Dorsolateral prefrontal cortex (tissue), 120 donors: ENCODE measurements at regions of chr6 and their contacts with region 1.

Region 1: GRCh38 chr6:89432875-89433251 is at the start of gene ANKRD6:
- DNase-seq: peak in 9 of 10 donors; percentile 36 to 83 (median 65)
- H3K4me3 ChIP-seq: peak within 1 kb of the TSS; percentile 54 to 91 (median 78)
- H3K27ac ChIP-seq: peak within 1 kb of the TSS in 8 of 59 donors; percentile 2 to 82 (median 48)
- H3K27me3 ChIP-seq: no peaks in the 10 kb centered on the region
- CTCF ChIP-seq: peak; percentile 48 to 96 (median 80)
- total RNA-seq, gene ANKRD6: 14.2 to 73.6 (median 37.4) TPM

Region 2: GRCh38 chr6:89413006-89413400 is 19.9 kb before region 1 on chr6:
- intact Hi-C with region 1: no loop called
- DNase-seq: peak in 3 of 10 donors; percentile 16 to 55 (median 28)
- H3K4me3 ChIP-seq: peak overlapping the region; percentile 65 to 98 (median 88)
- H3K27ac ChIP-seq: peak overlapping the region in 55 of 59 donors; percentile 1 to 98 (median 91)
- H3K27me3 ChIP-seq: no peaks in the 10 kb centered on the region
- CTCF ChIP-seq: no peak

Region 3: GRCh38 chr6:89582669-89583325 is 149.9 kb after region 1 on chr6:
- intact Hi-C with region 1: no loop called
- DNase-seq: no peak
- H3K4me3 ChIP-seq: no peak overlapping the region
- H3K27ac ChIP-seq: no peak overlapping the region
- H3K27me3 ChIP-seq: no peaks in the 10 kb centered on the region
- CTCF ChIP-seq: no peak

Region 4: DNA sequence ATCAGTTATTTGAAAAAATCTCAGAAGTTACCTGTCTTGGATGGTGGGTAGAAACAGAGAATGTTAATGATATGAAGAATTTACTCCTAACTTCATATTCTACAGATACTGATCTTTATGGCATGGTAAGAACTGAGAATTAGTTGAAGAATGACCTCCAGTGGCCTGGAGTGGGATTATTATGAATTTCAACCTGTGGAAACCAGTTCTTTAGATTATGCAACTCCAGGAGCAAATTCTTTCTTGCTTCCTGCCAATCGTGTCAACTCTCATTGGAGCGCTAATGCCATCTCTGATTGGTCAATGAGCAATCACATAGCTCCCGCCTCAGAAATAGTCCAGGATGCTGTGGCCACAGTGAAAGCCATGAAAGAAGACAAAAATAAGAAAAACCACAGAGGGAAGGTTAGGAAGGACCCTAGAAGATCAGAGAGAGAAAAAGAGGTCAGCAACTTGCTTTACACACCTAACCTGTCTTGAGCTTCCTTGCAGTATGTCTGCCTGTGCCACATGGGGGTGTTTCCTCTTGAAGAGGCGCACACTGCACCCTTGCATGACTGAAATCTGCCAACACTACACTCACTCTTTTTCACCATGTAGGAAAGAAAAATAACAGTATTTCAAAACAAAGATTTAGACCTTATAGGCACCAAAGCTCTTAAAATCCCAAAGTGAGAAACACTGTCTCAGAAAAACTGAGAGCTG is 165.3 kb after region 1 on chr6:
- intact Hi-C with region 1: loop called in 1 of 2 experiments (anchors 5 kb)
- DNase-seq: no peak
- H3K4me3 ChIP-seq: no peak overlapping the region
- H3K27ac ChIP-seq: no peak overlapping the region
- H3K27me3 ChIP-seq: no peaks in the 10 kb centered on the region
- CTCF ChIP-seq: peak in 30 of 56 donors; percentile 13 to 54 (median 32)

Region 5: GRCh38 chr6:89610149-89610642 is 177.3 kb after region 1 on chr6:
- intact Hi-C with region 1: loop called in 1 of 2 experiments (anchors 5 kb)
- DNase-seq: peak in 6 of 10 donors; percentile 17 to 49 (median 30)
- H3K4me3 ChIP-seq: no peak overlapping the region
- H3K27ac ChIP-seq: no peak overlapping the region
- H3K27me3 ChIP-seq: no peaks in the 10 kb centered on the region
- CTCF ChIP-seq: peak; percentile 26 to 79 (median 65)